HCT116 (cell line): ENCODE measurements at regions of chr2 and their contacts with region 1.

Region 1: GRCh38 chr2:208708486-208708885 is 301.9 kb downstream of the PTH2R start:
- DNase-seq: no peak
- ATAC-seq: no peak
- H3K4me3 ChIP-seq: no peak overlapping the region
- H3K27ac ChIP-seq: no peak overlapping the region
- H3K4me1 ChIP-seq: no peaks in the 10 kb centered on the region
- H3K27me3 ChIP-seq: peaks cover 1% of the 10 kb centered on the region
- CTCF ChIP-seq: no peak
- POLR2A ChIP-seq: no peak
- RAD21 ChIP-seq: no peak

Region 2: DNA sequence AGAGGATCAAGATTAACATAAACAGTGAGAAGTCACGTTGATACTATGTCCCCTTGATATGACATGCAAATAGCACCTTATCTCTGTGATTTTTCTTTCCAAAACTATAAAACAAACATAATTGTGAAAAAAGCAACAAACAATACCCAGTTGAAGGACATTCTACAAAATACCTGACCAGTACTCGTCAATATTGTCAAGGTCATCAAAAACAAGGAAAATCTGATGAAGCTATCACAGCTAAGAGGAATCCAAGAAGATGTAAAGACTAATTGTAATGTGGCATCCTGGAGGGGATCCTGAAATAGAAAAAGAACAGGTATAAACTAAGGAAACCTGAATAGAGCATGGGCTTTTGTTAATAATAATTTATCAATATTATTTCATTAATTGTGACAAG is 393.8 kb after region 1 on chr2:
- CTCF ChIA-PET with region 1: no interaction called
- POLR2A ChIA-PET with region 1: no interaction called
- RAD21 ChIA-PET with region 1: no interaction called
- intact Hi-C with region 1: loop called (anchors 5 kb)
- DNase-seq: no peak
- ATAC-seq: no peak
- H3K4me3 ChIP-seq: no peak overlapping the region
- H3K27ac ChIP-seq: no peak overlapping the region
- H3K4me1 ChIP-seq: no peaks in the 10 kb centered on the region
- H3K27me3 ChIP-seq: 0 out of 2 replicates have a peak, but pooled peaks cover 4% of the 10 kb centered on the region
- CTCF ChIP-seq: no peak
- POLR2A ChIP-seq: no peak
- RAD21 ChIP-seq: no peak